ENCODE measurements at regions of chr17 and their contacts with region 1.

Region 1: DNA sequence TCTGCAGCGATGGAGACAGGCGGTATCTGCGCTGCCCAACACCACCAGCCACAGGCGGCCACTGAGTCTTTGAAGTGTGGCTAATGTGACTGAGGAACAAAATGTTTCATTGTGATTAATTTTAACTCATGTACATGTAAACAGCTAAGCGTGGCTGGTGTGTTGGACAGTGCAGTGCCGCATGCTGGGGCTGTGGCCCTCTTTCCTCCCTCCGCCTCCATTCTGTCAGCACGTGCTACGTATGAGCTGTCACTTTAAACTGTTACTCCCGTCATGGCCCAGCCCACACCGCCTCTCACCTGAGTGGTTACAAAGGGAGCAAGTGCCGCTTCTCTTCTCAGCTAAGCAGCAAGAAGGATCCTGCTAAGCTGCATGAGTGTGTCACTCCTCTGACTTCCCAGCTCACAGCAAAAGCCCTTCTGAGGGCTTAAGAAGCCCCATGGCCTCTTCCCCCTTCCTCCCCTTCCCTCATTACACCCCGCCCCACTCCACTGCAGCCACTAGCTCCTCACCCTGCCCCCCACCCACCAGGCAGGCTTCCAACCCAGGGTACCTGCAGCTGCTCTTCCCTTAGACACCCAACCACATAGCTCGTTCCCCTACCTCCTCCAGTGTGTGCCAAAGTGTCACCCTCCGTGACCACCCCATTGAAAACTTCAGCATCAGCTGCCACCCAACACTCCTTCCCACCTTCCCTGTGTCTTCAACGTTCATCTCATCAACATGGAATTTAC is 15.0 kb downstream of the HASPIN start:
- DNase-seq: peak in 8 of 9 donors; percentile 56 to 69 (median 60)
- ATAC-seq: peak; percentile 79
- H3K4me3 ChIP-seq: no peak overlapping the region
- H3K4me3 Mint-ChIP-seq: peak overlapping the region; percentile 2 to 77 (median 68)
- H3K27ac ChIP-seq: no peak overlapping the region
- H3K27ac Mint-ChIP-seq: peak overlapping the region; percentile 61 to 95 (median 73)
- H3K4me1 ChIP-seq: peaks cover 11 to 20% of the 10 kb centered on the region in 2 donors
- H3K4me1 Mint-ChIP-seq: peaks cover 21 to 47% (median 38%) of the 10 kb centered on the region in 7 donors
- H3K27me3 ChIP-seq: no peaks in the 10 kb centered on the region
- H3K27me3 Mint-ChIP-seq: no peaks in the 10 kb centered on the region

Region 2: GRCh38 chr17:1939981-1940809 is 1798.5 kb before region 1 on chr17:
- CTCF ChIA-PET with region 1: no interaction called
- POLR2A ChIA-PET with region 1: no interaction called
- intact Hi-C with region 1: no loop called
- DNase-seq: no peak
- ATAC-seq: no peak
- H3K4me3 ChIP-seq: no peak overlapping the region
- H3K4me3 Mint-ChIP-seq: no peak overlapping the region
- H3K27ac ChIP-seq: no peak overlapping the region
- H3K27ac Mint-ChIP-seq: no peak overlapping the region
- H3K4me1 ChIP-seq: no peaks in the 10 kb centered on the region
- H3K4me1 Mint-ChIP-seq: no peaks in the 10 kb centered on the region
- H3K27me3 ChIP-seq: no peaks in the 10 kb centered on the region
- H3K27me3 Mint-ChIP-seq: no peaks in the 10 kb centered on the region

Region 3: GRCh38 chr17:3754458-3755334 is 16.0 kb after region 1 on chr17:
- CTCF ChIA-PET with region 1: interaction called, 12 read pairs
- POLR2A ChIA-PET with region 1: interaction called, 10 read pairs
- intact Hi-C with region 1: loop called in 1 of 2 experiments (anchors 2 kb)
- DNase-seq: peak; percentile 46 to 87 (median 77)
- ATAC-seq: peak; percentile 98
- H3K4me3 ChIP-seq: peak overlapping the region; percentile 59
- H3K4me3 Mint-ChIP-seq: peak overlapping the region in 7 of 10 donors; percentile 17 to 77 (median 57)
- H3K27ac ChIP-seq: peak overlapping the region; percentile 80
- H3K27ac Mint-ChIP-seq: peak overlapping the region in 8 of 9 donors; percentile 36 to 87 (median 80)
- H3K4me1 ChIP-seq: peaks cover 20 to 29% of the 10 kb centered on the region in 2 donors
- H3K4me1 Mint-ChIP-seq: peaks cover 16 to 39% (median 27%) of the 10 kb centered on the region in 7 donors
- H3K27me3 ChIP-seq: no peaks in the 10 kb centered on the region
- H3K27me3 Mint-ChIP-seq: no peaks in the 10 kb centered on the region

Region 4: GRCh38 chr17:3788200-3788599 is 49.5 kb after region 1 on chr17:
- CTCF ChIA-PET with region 1: interaction called, 4 read pairs
- POLR2A ChIA-PET with region 1: no interaction called
- intact Hi-C with region 1: loop called (anchors 2 to 5 kb)
- DNase-seq: no peak
- ATAC-seq: no peak
- H3K4me3 ChIP-seq: no peak overlapping the region
- H3K4me3 Mint-ChIP-seq: peak overlapping the region in 1 of 10 donors; percentile 27
- H3K27ac ChIP-seq: no peak overlapping the region
- H3K27ac Mint-ChIP-seq: peak overlapping the region in 2 of 9 donors; percentile 56
- H3K4me1 ChIP-seq: peaks cover 5 to 20% of the 10 kb centered on the region in 2 donors
- H3K4me1 Mint-ChIP-seq: peaks cover 0 to 33% (median 6%) of the 10 kb centered on the region in 7 donors
- H3K27me3 ChIP-seq: no peaks in the 10 kb centered on the region
- H3K27me3 Mint-ChIP-seq: no peaks in the 10 kb centered on the region

Region 5: DNA sequence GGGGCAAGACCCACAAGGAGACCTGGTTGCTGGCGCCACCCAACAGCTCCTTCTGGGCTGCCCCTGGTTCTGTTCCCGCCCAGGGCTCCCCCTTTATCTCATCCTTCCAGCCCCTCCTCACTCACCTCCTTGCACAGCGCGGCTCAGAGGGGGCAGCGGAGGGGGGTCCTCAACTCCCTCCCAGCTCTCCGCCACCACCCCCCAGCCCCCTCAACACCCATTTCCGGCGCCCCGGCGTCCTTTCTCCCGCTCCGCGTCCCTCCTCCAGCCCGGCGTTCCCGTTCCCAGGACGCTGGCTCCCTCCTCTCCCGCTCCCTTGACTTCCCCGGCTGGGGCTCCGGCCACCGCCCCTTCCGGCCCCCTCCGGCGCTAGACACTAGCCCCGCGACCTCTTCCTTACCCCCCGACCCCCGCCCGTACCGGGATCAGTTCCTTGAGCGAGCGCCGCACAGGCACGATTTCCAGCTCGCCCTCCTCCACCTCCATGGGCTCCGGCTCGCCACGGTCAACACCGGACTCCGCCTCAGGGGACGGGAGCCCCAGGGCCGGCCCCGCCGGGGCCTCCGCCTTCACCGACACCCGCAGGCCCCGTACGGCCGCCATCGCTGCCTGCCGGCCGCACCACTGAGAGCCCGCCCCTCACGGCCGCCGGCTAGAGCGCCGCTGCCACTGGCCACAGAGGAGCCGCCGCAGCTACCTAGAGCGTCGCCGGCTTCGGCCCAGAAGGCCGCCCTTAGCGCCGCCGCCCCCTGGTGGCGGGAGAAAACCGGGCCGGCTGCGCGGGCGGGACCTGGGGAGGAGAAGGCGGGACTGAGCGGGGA is 107.1 kb after region 1 on chr17 and contains the start of gene NCBP3:
- CTCF ChIA-PET with region 1: interaction called, 46 read pairs
- POLR2A ChIA-PET with region 1: interaction called, 9 read pairs
- intact Hi-C with region 1: loop called (anchors 1 kb)
- DNase-seq: peak; percentile 79 to 98 (median 90)
- ATAC-seq: peak; percentile 98
- H3K4me3 ChIP-seq: peak within 1 kb of the TSS; percentile 83
- H3K4me3 Mint-ChIP-seq: peak within 1 kb of the TSS; percentile 85 to 98 (median 90)
- H3K27ac ChIP-seq: peak within 1 kb of the TSS; percentile 90
- H3K27ac Mint-ChIP-seq: peak within 1 kb of the TSS; percentile 59 to 95 (median 88)
- H3K4me1 ChIP-seq: peaks cover 12 to 17% of the 10 kb centered on the region in 2 donors
- H3K4me1 Mint-ChIP-seq: peaks cover 18 to 33% (median 24%) of the 10 kb centered on the region in 7 donors
- H3K27me3 ChIP-seq: no peaks in the 10 kb centered on the region
- H3K27me3 Mint-ChIP-seq: peaks cover 0 to 13% (median 0%) of the 10 kb centered on the region in 5 donors
- total RNA-seq, gene NCBP3: 40.6 to 49.4 (median 46.7) TPM

Region 6: DNA sequence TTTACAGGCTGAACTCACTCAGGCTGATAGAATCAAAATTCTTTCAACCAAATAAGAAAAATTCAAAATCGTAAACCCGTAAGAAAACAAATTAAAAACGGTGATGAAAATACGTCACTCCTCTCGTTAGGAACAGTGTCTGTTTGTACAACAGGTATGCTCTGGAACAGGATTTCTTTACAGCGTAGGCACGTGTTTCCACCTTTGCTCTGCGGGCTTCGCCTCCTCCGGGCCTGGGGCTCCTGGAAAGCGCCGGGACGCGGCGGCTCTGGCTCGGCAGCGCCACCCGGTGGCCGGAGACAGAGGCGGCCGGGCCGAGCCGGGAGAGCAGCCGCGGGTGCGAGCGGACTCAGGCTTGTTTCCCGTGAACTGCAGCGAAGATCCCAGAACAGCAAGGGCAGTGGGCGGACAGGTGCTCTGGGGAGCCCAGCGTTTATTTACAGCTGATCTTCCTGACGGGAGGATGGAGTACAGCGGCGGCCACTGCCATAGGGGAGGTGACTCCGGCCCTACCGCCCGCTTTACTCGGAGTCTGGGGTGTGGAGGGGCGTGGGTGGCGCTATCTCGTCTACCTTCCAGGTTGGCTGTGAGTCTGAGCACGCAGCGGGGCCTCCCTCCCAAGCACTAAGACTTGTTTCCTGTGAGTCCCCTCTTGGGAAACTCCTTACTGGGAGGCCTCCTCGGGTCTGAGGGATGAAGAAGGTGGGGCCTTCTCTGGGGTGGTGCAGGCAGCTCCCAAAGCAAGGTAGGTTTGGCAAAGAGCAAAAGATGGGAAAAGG is 266.0 kb after region 1 on chr17:
- CTCF ChIA-PET with region 1: interaction called, 4 read pairs
- POLR2A ChIA-PET with region 1: no interaction called
- intact Hi-C with region 1: loop called in 1 of 2 experiments (anchors 1 kb)
- DNase-seq: peak; percentile 32 to 80 (median 64)
- ATAC-seq: peak; percentile 68
- H3K4me3 ChIP-seq: no peak overlapping the region
- H3K4me3 Mint-ChIP-seq: no peak overlapping the region
- H3K27ac ChIP-seq: no peak overlapping the region
- H3K27ac Mint-ChIP-seq: peak overlapping the region in 2 of 9 donors; percentile 65
- H3K4me1 ChIP-seq: peaks cover 0 to 7% of the 10 kb centered on the region in 2 donors
- H3K4me1 Mint-ChIP-seq: peaks cover 4 to 17% (median 7%) of the 10 kb centered on the region in 7 donors
- H3K27me3 ChIP-seq: no peaks in the 10 kb centered on the region
- H3K27me3 Mint-ChIP-seq: no peaks in the 10 kb centered on the region